ENCODE measurements at regions of chr17 and their contacts with region 1.

Region 1: GRCh38 chr17:17836250-17836817 is 452 bp downstream of the SREBF1 start:
- DNase-seq: peak; percentile 99
- H3K4me3 Mint-ChIP-seq: peak overlapping the region; percentile 91
- H3K27ac Mint-ChIP-seq: peak overlapping the region; percentile 98
- H3K4me1 Mint-ChIP-seq: peaks cover 72% of the 10 kb centered on the region
- H3K27me3 Mint-ChIP-seq: no peaks in the 10 kb centered on the region

Region 2: DNA sequence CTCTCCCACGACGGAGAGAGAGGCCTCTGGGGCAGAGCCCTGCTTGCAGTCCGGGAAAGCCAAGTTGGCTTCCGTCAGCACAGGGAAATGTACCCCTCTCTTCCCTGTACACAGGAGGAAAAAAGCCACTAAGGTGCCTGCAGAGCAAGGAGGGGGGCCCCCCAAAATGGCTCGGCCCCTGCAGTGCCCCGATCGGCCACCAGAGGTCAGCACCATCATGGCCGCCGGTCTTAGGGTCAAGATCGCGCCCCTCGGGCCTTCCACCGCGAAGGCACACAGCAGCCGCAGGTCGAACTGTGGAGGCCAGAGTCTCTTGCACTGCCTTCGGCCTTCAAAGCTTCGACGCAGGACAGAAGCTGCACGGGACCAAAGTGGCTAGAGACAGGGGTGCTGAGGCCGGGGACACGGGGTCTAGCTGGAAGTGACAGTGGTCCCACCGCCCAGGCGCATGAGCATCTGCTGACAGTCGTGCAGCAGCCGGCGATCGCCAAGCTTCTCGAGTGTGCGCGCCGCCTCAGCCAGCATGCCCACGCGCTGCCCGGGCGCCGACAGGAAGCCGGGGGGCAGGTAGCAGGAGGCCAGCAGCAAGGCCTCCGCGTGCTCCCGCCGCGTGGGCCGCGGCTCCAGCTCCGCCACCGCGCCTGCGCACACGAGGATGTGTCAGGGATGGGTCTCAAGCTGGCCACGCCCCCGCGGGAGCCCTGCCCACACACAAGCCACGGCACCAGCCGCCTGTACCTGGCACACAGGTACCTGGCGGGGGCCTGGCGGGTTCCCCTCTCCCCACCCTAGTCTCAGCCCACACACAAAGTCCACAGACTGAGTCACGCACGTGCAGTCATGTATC is 23.9 kb before region 1 on chr17:
- CTCF ChIA-PET with region 1: interaction called, 10 read pairs
- intact Hi-C with region 1: no loop called
- DNase-seq: peak; percentile 72
- H3K4me3 Mint-ChIP-seq: no peak overlapping the region
- H3K27ac Mint-ChIP-seq: peak overlapping the region; percentile 18
- H3K4me1 Mint-ChIP-seq: peaks cover 10% of the 10 kb centered on the region
- H3K27me3 Mint-ChIP-seq: no peaks in the 10 kb centered on the region

Region 3: DNA sequence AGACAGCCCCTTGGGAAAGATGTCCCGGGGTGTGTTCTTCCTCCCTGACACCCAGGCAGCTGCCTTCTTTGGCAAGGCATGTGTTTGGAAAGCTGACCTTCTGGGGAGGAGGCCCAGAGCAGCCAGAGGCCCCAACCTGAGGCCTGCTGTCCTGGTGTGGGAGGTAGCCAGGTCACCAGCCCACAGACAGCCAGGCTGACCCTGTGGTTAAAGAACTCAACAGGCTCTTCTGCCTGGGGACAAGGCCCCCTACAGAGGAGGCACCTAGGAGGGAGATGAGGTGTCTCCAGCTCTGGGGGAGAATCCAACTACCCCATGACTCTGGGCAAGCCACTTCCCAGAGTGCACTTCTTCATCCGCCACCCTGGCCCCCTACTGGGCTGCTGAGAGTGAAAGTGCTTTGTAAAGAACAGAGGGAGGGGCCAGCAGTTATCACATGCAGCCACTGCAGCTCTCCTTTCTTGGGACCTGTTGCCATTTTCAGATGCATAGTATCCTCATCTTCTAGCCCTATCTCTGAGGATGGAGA is 13.6 kb after region 1 on chr17:
- CTCF ChIA-PET with region 1: interaction called, 43 read pairs
- intact Hi-C with region 1: loop called (anchors 1 kb)
- DNase-seq: peak; percentile 94
- H3K4me3 Mint-ChIP-seq: peak overlapping the region; percentile 41
- H3K27ac Mint-ChIP-seq: peak overlapping the region; percentile 95
- H3K4me1 Mint-ChIP-seq: peaks cover 78% of the 10 kb centered on the region
- H3K27me3 Mint-ChIP-seq: no peaks in the 10 kb centered on the region

Region 4: DNA sequence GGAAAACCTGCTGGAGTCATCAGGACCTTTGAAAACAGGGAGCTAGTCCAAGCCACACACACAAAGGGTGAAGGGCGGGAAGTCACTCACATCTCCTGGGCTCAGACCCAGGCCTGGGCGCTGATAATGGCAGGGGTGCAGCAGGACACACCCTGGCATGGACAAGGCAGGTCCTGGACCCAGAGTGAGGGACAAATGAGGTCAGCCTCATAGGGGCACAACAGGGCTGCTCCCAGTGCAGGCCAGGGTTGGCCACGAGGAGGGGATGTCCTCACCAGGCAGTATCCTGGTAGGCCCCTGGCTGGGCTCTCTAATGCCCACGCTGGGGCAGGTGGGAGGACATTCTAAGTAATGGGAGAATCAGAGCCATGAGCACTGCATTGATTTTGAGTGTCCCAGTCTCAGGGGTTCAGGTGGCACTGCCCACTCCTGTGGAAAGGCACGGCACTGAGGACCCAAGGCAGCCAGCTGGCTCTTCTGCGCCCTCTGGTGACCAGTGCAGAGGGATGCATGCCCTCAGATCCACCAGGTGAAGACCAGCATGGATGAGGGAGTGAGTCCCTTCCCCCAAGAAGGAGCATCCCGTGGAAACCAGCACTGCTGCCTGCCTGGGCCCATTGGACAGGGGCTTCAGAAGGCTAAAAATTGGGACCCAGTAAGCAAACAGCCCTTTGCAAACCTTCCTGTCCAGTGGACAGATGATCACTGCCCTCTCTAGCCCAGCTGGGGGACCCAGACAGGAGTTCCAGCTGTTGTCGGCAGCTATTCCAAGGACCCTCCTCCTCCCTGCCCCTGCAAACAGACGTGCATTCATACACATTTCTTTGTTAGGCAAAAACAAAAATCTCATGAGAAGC is 23.8 kb after region 1 on chr17:
- CTCF ChIA-PET with region 1: interaction called, 43 read pairs
- intact Hi-C with region 1: no loop called
- DNase-seq: peak; percentile 80
- H3K4me3 Mint-ChIP-seq: no peak overlapping the region
- H3K27ac Mint-ChIP-seq: no peak overlapping the region
- H3K4me1 Mint-ChIP-seq: peaks cover 26% of the 10 kb centered on the region
- H3K27me3 Mint-ChIP-seq: no peaks in the 10 kb centered on the region

Region 5: DNA sequence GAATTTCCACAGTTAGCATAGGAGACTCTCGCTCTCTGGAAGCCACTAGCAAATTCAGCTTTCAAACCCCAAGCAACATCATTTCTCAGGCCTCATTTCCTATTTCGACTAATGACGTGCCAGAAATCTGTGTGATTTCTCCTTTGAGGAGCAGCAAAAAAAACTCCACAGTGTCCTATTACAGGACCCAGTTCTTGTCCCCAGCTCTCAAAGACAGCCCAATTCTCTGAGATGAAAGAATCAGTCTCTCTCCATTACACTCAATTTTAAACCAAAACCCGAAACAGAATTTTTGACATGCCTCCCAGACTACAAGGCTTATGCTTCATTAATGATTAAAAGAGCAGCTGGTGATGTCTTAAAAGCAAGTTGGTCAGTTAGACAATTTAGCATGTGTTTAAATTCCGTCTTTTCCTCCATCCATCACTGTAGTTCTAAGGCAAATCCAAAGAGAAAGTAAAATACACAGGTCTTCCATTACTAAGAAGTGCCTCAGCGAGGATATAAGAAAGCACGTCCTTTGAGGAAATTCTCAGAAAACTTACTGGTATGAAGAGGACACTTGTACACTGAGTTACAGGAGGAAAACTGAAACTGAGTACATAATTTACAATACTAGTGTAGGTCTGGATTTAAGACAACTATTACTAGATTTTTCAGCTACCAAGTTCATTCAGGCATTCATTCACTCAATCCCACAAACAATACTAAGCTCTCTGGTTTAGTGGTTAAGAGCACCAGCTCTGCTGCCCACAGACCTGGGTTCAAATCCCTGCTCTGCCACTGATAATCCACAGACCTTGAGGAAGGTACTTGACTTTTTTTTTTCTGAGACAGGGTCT is 123.4 kb after region 1 on chr17:
- CTCF ChIA-PET with region 1: no interaction called
- intact Hi-C with region 1: loop called (anchors 1 kb)
- DNase-seq: peak; percentile 60
- H3K4me3 Mint-ChIP-seq: peak overlapping the region; percentile 74
- H3K27ac Mint-ChIP-seq: peak overlapping the region; percentile 96
- H3K4me1 Mint-ChIP-seq: peaks cover 72% of the 10 kb centered on the region
- H3K27me3 Mint-ChIP-seq: no peaks in the 10 kb centered on the region

Region 6: DNA sequence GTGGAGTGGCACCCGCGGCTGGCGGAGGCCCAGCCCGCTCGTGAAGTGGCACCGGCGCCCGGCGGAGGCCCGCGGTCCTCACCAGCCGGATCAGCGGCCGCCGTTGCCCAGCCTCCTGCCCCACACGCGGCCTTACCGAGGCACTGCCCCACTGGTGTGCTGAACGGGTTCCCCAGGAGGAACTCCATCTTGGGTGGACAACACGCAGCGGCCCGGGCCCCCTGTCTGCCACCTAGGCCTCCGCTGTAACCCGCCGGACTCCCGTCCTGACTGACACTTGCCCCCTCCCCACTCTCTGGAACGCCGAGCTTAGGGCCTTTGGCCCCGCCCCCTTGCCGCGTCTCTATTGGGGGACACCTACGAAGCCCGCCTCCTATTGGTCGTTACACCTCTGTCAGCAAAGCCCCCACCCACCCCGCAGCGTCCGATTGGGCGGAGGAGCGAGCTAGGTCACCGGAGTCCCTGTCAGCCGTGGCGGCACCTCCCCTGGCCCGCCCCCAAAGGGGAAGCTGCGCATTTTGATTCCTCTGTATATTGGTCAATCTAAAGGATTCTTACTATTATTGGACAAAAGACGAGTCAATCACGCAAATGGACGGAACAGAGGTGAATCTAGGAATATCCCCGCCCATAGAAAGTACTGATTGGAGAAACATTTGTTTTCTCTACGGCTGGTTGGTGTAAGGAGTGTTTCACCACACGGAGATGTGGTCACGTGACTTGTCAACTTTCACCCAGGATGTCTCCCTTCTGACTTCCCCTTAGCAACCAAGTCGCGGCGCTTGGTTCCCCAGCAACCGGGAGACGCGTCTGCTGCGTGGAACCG is 136.0 kb after region 1 on chr17 and contains the starts of genes DRC3 and TOM1L2:
- CTCF ChIA-PET with region 1: no interaction called
- intact Hi-C with region 1: loop called (anchors 1 kb)
- DNase-seq: peak; percentile 100
- H3K4me3 Mint-ChIP-seq: peak within 1 kb of the TSS; percentile 90
- H3K27ac Mint-ChIP-seq: peak within 1 kb of the TSS; percentile 75
- H3K4me1 Mint-ChIP-seq: peaks cover 35% of the 10 kb centered on the region
- H3K27me3 Mint-ChIP-seq: no peaks in the 10 kb centered on the region
- total RNA-seq, gene DRC3: 0.40 to 0.64 TPM
- total RNA-seq, gene TOM1L2: 9.8 to 9.9 TPM

Region 7: GRCh38 chr17:18235743-18236256 is 399.5 kb after region 1 on chr17:
- CTCF ChIA-PET with region 1: no interaction called
- intact Hi-C with region 1: no loop called
- DNase-seq: no peak
- H3K4me3 Mint-ChIP-seq: no peak overlapping the region
- H3K27ac Mint-ChIP-seq: no peak overlapping the region
- H3K4me1 Mint-ChIP-seq: no peaks in the 10 kb centered on the region
- H3K27me3 Mint-ChIP-seq: no peaks in the 10 kb centered on the region